Panc1 (cell line): ENCODE measurements at regions of chr2 and their contacts with region 1.

Region 1: GRCh38 chr2:30472326-30472725 is 25.3 kb downstream of the LCLAT1 start:
- DNase-seq: no peak
- ATAC-seq: no peak
- H3K4me3 ChIP-seq: no peak overlapping the region
- H3K27ac ChIP-seq: no peak overlapping the region
- H3K4me1 ChIP-seq: no peaks in the 10 kb centered on the region
- H3K27me3 ChIP-seq: no peaks in the 10 kb centered on the region
- CTCF ChIP-seq: no peak

Region 2: GRCh38 chr2:30362468-30363081 is 109.8 kb before region 1 on chr2:
- CTCF ChIA-PET with region 1: no interaction called
- POLR2A ChIA-PET with region 1: no interaction called
- in situ Hi-C with region 1: no loop called
- intact Hi-C with region 1: no loop called
- DNase-seq: no peak
- ATAC-seq: no peak
- H3K4me3 ChIP-seq: no peak overlapping the region
- H3K27ac ChIP-seq: no peak overlapping the region
- H3K4me1 ChIP-seq: no peaks in the 10 kb centered on the region
- H3K27me3 ChIP-seq: no peaks in the 10 kb centered on the region; the same call in 1 of the 2 replicates
- CTCF ChIP-seq: no peak

Region 3: DNA sequence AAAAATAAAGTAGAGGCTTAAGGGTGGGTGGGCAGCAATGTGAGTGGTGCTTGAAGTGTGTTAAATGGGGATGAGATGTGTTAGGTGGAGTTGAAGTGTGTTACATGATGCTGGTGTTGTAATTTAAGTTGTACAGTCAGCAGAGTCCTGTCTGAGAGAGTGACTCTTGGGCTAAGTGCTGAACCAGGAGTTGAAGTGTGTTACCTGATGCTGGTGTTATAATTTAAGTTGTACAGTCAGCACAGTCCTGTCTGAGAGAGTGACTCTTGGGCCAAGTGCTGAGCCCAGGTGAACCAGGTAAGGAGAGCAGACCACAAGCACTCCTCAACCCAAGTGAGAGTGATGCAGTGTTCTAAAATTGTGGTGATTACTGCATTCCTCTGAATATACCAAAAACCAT is 15.3 kb after region 1 on chr2:
- CTCF ChIA-PET with region 1: no interaction called
- POLR2A ChIA-PET with region 1: no interaction called
- in situ Hi-C with region 1: no loop called
- intact Hi-C with region 1: no loop called
- DNase-seq: no peak
- ATAC-seq: no peak
- H3K4me3 ChIP-seq: no peak overlapping the region
- H3K27ac ChIP-seq: no peak overlapping the region
- H3K4me1 ChIP-seq: no peaks in the 10 kb centered on the region
- H3K27me3 ChIP-seq: no peaks in the 10 kb centered on the region
- CTCF ChIP-seq: no peak

Region 4: DNA sequence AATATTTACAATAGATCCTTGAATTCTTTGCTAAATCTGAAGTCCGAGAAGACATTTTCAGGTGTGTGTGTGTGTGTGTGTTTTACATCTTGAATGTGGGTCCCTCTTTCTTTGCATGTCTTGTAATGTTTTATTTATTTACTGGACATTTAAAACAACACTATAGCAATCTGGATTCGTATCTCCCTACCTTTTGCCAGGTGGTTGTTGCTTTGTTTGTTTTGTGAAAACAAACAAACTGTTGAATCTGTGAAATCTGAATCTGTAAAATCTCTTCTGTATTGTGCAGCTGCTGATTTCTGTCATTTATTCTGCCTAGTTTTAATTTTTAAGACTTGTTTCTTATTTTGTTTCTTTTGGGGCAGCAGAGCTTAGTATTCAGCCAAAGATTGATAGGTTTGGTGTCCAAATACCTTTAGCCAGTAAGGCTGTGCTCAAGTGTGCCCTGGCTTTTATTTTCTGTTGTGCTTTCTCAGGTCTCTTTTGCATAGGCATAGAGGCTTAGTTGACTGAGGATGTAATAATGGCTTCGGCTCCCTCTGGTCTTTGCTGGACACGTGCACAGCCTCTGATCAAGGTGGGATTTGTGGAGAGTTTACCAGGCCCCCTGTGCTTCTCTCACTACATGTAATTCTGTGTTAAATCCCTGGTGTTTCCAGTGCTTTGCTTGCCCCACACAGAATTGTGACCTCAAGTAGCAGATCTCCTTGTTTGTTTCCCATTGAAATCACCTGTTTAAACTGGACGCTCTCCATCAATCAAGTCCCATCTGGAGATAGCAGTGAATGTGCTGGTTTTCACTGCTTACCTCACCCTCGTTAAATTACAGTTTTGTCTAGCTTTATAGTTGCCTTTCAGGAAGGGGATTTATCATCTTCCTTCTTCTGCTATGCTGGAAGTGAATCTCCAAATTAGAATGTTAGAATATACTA is 1955.6 kb after region 1 on chr2:
- CTCF ChIA-PET with region 1: no interaction called
- POLR2A ChIA-PET with region 1: interaction called, 13 read pairs
- in situ Hi-C with region 1: no loop called
- intact Hi-C with region 1: no loop called
- DNase-seq: no peak
- ATAC-seq: peak; percentile 75
- H3K4me3 ChIP-seq: no peak overlapping the region
- H3K27ac ChIP-seq: no peak overlapping the region
- H3K4me1 ChIP-seq: peaks cover 19% of the 10 kb centered on the region
- H3K27me3 ChIP-seq: no peaks in the 10 kb centered on the region
- CTCF ChIP-seq: no peak